ENCODE measurements at regions of chr2 and their contacts with region 1.

Region 1: GRCh38 chr2:145079641-145080040 is 559.7 kb upstream of the ZEB2 start:
- DNase-seq: no peak
- ATAC-seq: no peak

Region 2: DNA sequence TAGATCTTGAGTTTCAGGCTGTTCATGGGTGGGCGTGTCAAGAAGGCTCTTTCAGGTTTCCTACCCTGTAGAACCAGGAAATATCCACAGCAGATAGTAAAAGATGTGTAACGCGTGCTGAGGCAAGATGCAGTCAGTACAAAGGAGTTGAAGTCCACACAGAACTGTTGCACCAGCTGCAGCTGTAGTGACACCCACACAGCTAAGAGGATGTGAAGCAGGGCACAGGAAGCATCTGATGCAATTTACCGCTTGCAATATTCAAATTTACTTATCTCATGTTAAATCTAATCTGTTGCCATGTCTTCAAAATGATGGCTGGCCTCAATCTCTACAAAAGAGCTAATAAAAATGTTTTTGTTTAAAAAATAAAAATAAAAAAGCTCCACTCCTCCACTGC is 1817.7 kb before region 1 on chr2:
- intact Hi-C with region 1: loop called (anchors 5 kb)
- DNase-seq: no peak
- ATAC-seq: no peak

Region 3: DNA sequence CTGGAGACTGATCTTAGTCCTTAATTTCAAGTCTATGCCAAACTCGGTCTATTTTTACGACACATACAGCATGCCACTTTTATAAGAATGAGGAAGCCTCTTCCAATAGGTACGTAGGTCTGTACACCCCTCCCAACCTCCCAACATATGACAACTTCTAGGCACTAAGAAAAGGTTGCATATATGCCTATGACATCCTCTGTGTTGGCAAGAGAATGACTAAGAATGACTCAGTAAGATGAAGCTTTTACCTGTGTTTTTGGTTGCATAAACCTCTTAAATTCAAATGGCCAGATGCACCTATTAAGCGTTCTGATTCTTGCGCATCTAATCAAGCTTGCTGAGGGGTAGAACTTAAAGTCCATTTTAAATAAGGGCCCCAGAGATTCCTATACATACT is 26.7 kb after region 1 on chr2:
- intact Hi-C with region 1: no loop called
- DNase-seq: no peak
- ATAC-seq: no peak

Region 4: GRCh38 chr2:145764631-145765030 is 685.0 kb after region 1 on chr2:
- intact Hi-C with region 1: loop called (anchors 5 kb)
- DNase-seq: peak; percentile 78
- ATAC-seq: peak; percentile 62